Naive thymus-derived CD4-positive, alpha-beta T cell (primary cell): ENCODE measurements at regions of chr17 and their contacts with region 1.

Region 1: DNA sequence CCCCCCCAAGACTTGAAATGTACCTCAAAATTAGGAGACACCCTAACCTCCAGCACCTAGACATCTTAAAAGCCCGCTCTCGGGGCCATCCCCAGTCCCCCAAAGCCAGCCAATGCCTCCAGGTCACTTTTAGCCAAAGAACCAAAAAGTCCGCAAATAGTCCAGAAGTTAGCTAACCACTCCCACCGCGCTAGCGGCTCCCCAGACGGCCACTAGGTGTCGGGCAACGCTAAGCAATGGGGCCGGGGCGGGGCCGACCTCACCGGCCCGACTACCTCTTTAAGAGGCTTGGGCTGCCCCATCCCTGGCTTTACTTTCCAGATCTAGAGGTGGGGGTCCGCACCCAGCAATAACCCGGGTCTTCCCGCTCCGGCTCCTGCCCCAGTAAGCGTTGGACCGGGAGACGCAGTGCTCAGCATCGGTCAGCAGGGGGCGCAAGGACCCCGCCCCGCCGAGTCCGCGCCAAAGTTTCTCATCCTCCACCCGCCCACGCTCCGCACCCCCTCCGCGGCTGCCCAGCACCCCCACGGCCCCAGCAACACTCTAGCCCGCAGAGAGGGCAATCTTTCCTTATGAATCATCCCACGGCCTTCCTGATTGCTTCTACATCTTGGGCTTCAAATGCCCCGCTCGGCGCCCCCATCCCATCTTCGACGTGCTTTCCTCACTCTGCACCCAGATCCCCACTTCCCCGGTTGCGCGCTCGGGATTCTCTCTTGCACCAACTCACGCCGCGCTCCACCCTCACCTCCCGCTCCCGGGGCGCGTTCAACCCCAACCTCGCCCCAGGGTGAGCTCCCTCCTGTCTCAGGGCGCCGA is 765 bp downstream of the COL1A1 start:
- DNase-seq: peak; percentile 66 to 84 (median 78)
- ATAC-seq: peak; percentile 80
- H3K4me3 ChIP-seq: peak overlapping the region; percentile 61
- H3K4me3 Mint-ChIP-seq: peak overlapping the region; percentile 70 to 87 (median 76)
- H3K27ac ChIP-seq: peak overlapping the region; percentile 26
- H3K27ac Mint-ChIP-seq: peak overlapping the region in 7 of 9 donors; percentile 47 to 92 (median 87)
- H3K4me1 ChIP-seq: peaks cover 12% of the 10 kb centered on the region in 2 donors
- H3K4me1 Mint-ChIP-seq: peaks cover 6 to 27% (median 25%) of the 10 kb centered on the region in 7 donors
- H3K27me3 ChIP-seq: peaks cover 5 to 13% of the 10 kb centered on the region in 2 donors
- H3K27me3 Mint-ChIP-seq: peaks cover 43 to 70% (median 49%) of the 10 kb centered on the region in 5 donors

Region 2: DNA sequence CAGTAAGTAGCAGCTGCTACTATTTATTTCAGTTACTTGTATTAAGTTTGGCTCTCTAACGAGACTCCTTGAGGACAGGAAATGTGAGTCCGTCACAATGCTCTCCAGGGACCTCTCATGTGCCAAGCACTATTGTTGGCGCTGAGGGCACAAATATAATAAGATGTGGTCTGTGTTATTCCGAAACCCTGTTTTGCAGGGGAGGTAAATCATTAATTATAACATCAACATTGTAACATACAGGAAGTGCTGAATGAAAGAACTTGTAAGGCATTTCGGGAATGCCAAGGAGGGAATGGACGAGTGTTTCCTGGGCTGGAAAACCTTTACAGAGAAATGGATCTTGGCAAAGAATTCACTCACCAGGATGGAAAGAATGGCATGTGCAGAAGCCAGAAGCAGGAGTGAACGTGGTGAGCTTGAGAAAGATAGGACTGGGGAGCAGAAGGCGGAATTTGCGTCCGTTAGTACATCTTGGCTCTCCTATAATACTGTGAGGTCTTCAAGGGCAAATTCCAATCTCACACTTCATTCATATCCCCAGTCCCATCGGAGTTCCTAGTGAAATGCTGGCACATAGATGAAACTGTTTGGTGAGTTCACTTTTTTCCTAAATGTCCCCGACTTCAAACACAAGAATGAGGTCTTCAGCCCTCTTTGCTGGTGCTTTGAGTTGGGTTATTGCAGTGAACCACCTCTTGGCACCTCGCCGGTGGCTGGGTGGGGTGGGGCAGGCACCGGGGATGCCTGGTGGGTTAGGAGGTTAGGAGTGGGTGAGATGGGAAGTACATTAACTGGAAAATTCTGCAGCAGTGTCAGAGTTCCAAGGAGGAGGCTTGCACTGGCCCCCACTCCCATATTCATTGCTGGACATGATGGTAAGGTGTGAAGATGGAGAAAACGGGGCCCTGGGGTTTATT is 364.3 kb before region 1 on chr17:
- CTCF ChIA-PET with region 1: no interaction called
- POLR2A ChIA-PET with region 1: no interaction called
- intact Hi-C with region 1: no loop called
- DNase-seq: no peak
- ATAC-seq: no peak
- H3K4me3 ChIP-seq: no peak overlapping the region
- H3K4me3 Mint-ChIP-seq: no peak overlapping the region
- H3K27ac ChIP-seq: no peak overlapping the region
- H3K27ac Mint-ChIP-seq: peak overlapping the region in 4 of 9 donors; percentile 34 to 61 (median 48)
- H3K4me1 ChIP-seq: no peaks in the 10 kb centered on the region
- H3K4me1 Mint-ChIP-seq: peaks cover 0 to 16% (median 11%) of the 10 kb centered on the region in 7 donors
- H3K27me3 ChIP-seq: no peaks in the 10 kb centered on the region
- H3K27me3 Mint-ChIP-seq: no peaks in the 10 kb centered on the region

Region 3: DNA sequence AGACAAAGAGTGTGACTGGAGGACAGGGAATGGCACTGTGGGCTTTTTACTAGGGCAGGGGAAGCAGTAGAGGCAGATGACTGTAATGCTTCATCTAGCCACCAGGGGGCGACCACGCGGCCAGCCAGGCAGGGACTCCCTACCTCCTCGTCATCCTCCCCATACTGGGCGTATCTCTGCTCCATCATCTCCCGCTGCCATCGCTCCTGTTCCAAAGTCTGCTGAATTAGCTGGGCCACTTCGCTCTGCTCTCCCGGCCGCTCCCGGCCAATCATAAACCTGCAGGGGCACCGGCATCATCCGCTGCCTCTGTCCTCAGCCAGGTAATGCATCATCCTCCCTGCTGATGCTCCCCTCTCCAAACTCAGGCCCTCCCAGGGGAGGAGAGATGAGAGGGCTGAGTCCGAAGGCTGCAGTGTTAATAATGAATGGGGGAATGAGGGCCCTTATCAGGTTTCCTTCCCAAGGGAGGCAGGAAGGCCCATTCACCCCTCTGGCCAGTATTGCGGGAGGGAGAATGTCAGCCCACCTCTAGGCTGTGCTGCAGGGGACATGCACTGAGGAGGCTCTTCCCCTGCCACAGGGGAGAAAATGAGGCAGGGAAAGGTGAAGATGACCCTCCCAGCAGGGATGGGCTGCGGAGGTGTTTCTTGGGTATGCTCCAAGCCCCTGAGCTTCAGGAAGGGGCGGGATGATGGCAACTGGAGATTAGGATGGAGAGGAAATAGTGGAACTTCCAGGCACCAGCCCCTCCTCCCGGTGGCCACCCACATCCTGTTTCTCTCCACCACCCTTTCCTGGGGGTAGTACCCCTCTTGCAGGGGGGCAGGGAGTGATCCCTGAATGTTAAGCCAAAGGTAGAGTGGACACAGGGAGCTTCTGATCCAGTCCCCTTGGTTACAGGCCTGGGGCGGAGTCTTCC is 60.5 kb before region 1 on chr17:
- CTCF ChIA-PET with region 1: interaction called, 4 read pairs
- POLR2A ChIA-PET with region 1: no interaction called
- intact Hi-C with region 1: loop called (anchors 1 to 2 kb)
- DNase-seq: peak; percentile 68 to 88 (median 77)
- ATAC-seq: peak; percentile 93
- H3K4me3 ChIP-seq: peak overlapping the region; percentile 55
- H3K4me3 Mint-ChIP-seq: peak overlapping the region; percentile 33 to 91 (median 72)
- H3K27ac ChIP-seq: peak overlapping the region; percentile 42
- H3K27ac Mint-ChIP-seq: peak overlapping the region in 8 of 9 donors; percentile 56 to 92 (median 80)
- H3K4me1 ChIP-seq: peaks cover 37 to 42% of the 10 kb centered on the region in 2 donors
- H3K4me1 Mint-ChIP-seq: peaks cover 49 to 80% (median 63%) of the 10 kb centered on the region in 7 donors
- H3K27me3 ChIP-seq: no peaks in the 10 kb centered on the region
- H3K27me3 Mint-ChIP-seq: no peaks in the 10 kb centered on the region

Region 4: GRCh38 chr17:50213026-50214022 is 12.7 kb after region 1 on chr17:
- CTCF ChIA-PET with region 1: interaction called, 39 read pairs
- POLR2A ChIA-PET with region 1: interaction called, 4 read pairs
- intact Hi-C with region 1: no loop called
- DNase-seq: peak in 3 of 9 donors; percentile 14 to 85 (median 42)
- ATAC-seq: peak; percentile 89
- H3K4me3 ChIP-seq: no peak overlapping the region
- H3K4me3 Mint-ChIP-seq: peak overlapping the region in 2 of 10 donors; percentile 14 to 45
- H3K27ac ChIP-seq: no peak overlapping the region
- H3K27ac Mint-ChIP-seq: peak overlapping the region in 2 of 9 donors; percentile 56 to 79
- H3K4me1 ChIP-seq: peaks cover 0 to 4% of the 10 kb centered on the region in 2 donors
- H3K4me1 Mint-ChIP-seq: peaks cover 0 to 10% (median 5%) of the 10 kb centered on the region in 7 donors
- H3K27me3 ChIP-seq: peaks cover 0 to 6% of the 10 kb centered on the region in 2 donors
- H3K27me3 Mint-ChIP-seq: peaks cover 0 to 59% (median 14%) of the 10 kb centered on the region in 5 donors

Region 5: GRCh38 chr17:50248255-50248654 is 47.6 kb after region 1 on chr17:
- CTCF ChIA-PET with region 1: no interaction called
- POLR2A ChIA-PET with region 1: no interaction called
- intact Hi-C with region 1: no loop called
- DNase-seq: no peak
- ATAC-seq: no peak
- H3K4me3 ChIP-seq: no peak overlapping the region
- H3K4me3 Mint-ChIP-seq: no peak overlapping the region
- H3K27ac ChIP-seq: no peak overlapping the region
- H3K27ac Mint-ChIP-seq: no peak overlapping the region
- H3K4me1 ChIP-seq: no peaks in the 10 kb centered on the region
- H3K4me1 Mint-ChIP-seq: no peaks in the 10 kb centered on the region
- H3K27me3 ChIP-seq: peaks cover 0 to 4% of the 10 kb centered on the region in 2 donors
- H3K27me3 Mint-ChIP-seq: peaks cover 26 to 44% (median 34%) of the 10 kb centered on the region in 5 donors

Region 6: GRCh38 chr17:50297407-50297865 is 96.8 kb after region 1 on chr17:
- CTCF ChIA-PET with region 1: interaction called, 60 read pairs
- POLR2A ChIA-PET with region 1: no interaction called
- intact Hi-C with region 1: loop called (anchors 1 kb)
- DNase-seq: peak; percentile 58 to 82 (median 76)
- ATAC-seq: peak; percentile 98
- H3K4me3 ChIP-seq: no peak overlapping the region
- H3K4me3 Mint-ChIP-seq: no peak overlapping the region
- H3K27ac ChIP-seq: no peak overlapping the region
- H3K27ac Mint-ChIP-seq: no peak overlapping the region
- H3K4me1 ChIP-seq: no peaks in the 10 kb centered on the region
- H3K4me1 Mint-ChIP-seq: peaks cover 0 to 10% (median 0%) of the 10 kb centered on the region in 7 donors
- H3K27me3 ChIP-seq: no peaks in the 10 kb centered on the region
- H3K27me3 Mint-ChIP-seq: peaks cover 0 to 14% (median 5%) of the 10 kb centered on the region in 5 donors

Region 7: GRCh38 chr17:50386510-50386909 is 185.8 kb after region 1 on chr17:
- CTCF ChIA-PET with region 1: no interaction called
- POLR2A ChIA-PET with region 1: no interaction called
- intact Hi-C with region 1: no loop called
- DNase-seq: no peak
- ATAC-seq: no peak
- H3K4me3 ChIP-seq: no peak overlapping the region
- H3K4me3 Mint-ChIP-seq: no peak overlapping the region
- H3K27ac ChIP-seq: no peak overlapping the region
- H3K27ac Mint-ChIP-seq: peak overlapping the region in 1 of 9 donors; percentile 41
- H3K4me1 ChIP-seq: no peaks in the 10 kb centered on the region
- H3K4me1 Mint-ChIP-seq: peaks cover 0 to 8% (median 0%) of the 10 kb centered on the region in 7 donors
- H3K27me3 ChIP-seq: no peaks in the 10 kb centered on the region
- H3K27me3 Mint-ChIP-seq: no peaks in the 10 kb centered on the region